ENCODE measurements at regions of chr11 and their contacts with region 1.

Region 1: GRCh38 chr11:62497132-62497915 is 49.3 kb downstream of the AHNAK start:
- DNase-seq: peak in 6 of 10 donors; percentile 11 to 67 (median 54)
- H3K4me3 ChIP-seq: no peak overlapping the region
- H3K27ac ChIP-seq: no peak overlapping the region
- H3K27me3 ChIP-seq: peaks cover 0 to 20% (median 0%) of the 10 kb centered on the region in 45 donors
- CTCF ChIP-seq: peak in 54 of 56 donors; percentile 11 to 84 (median 60)

Region 2: GRCh38 chr11:62132188-62132587 is 365.1 kb before region 1 on chr11:
- intact Hi-C with region 1: no loop called
- DNase-seq: peak in 2 of 10 donors; percentile 14 to 28
- H3K4me3 ChIP-seq: no peak overlapping the region
- H3K27ac ChIP-seq: peak overlapping the region in 2 of 59 donors; percentile 3 to 60
- H3K27me3 ChIP-seq: no peaks in the 10 kb centered on the region
- CTCF ChIP-seq: no peak

Region 3: DNA sequence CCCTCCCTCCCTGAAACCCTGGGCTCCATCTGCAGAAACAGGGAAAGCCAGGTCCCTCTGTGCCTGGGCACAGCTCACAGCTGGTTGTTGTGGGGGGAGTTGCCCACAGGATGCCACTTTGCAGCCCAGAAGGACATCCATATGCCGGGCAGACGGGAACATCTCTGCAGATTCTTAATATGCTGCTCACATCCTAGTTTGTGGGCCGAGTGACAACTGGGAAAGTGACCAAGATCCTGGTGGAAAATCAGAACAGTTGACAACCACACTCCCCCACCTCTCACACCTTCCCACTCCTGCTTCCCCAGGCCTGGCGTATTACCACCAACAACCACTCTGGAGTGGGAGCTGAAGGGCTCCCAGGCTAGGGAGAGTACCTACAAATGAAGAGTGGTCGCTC is 85.8 kb before region 1 on chr11:
- intact Hi-C with region 1: no loop called
- DNase-seq: peak in 9 of 10 donors; percentile 42 to 75 (median 62)
- H3K4me3 ChIP-seq: no peak overlapping the region
- H3K27ac ChIP-seq: peak overlapping the region in 1 of 59 donors; percentile 63
- H3K27me3 ChIP-seq: no peaks in the 10 kb centered on the region
- CTCF ChIP-seq: no peak

Region 4: DNA sequence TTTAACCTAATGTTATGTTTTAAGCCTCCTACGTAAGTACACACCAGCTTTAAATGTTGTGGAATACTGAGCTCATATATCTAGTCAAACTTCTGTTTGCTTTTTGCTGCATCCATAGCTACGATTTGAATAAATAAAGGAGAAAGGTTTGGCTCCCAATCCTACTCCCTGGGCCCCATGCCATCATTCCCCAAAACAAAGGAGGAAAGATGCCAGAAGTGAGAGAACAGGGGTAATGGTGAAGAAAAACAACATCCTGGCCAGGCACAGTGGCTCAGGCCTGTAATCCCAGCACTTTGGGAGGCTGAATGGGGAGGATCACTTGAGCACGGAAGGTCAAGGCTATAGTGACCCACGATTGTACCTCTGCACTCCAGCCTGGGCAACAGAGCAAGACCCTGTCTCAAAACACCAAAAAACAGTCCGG is 52.0 kb before region 1 on chr11:
- intact Hi-C with region 1: loop called in 1 of 2 experiments (anchors 5 kb)
- DNase-seq: peak in 1 of 10 donors; percentile 27
- H3K4me3 ChIP-seq: peak overlapping the region in 31 of 59 donors; percentile 37 to 76 (median 59)
- H3K27ac ChIP-seq: peak overlapping the region in 12 of 59 donors; percentile 21 to 94 (median 85)
- H3K27me3 ChIP-seq: peaks cover 0 to 3% (median 0%) of the 10 kb centered on the region in 45 donors
- CTCF ChIP-seq: no peak

Region 5: DNA sequence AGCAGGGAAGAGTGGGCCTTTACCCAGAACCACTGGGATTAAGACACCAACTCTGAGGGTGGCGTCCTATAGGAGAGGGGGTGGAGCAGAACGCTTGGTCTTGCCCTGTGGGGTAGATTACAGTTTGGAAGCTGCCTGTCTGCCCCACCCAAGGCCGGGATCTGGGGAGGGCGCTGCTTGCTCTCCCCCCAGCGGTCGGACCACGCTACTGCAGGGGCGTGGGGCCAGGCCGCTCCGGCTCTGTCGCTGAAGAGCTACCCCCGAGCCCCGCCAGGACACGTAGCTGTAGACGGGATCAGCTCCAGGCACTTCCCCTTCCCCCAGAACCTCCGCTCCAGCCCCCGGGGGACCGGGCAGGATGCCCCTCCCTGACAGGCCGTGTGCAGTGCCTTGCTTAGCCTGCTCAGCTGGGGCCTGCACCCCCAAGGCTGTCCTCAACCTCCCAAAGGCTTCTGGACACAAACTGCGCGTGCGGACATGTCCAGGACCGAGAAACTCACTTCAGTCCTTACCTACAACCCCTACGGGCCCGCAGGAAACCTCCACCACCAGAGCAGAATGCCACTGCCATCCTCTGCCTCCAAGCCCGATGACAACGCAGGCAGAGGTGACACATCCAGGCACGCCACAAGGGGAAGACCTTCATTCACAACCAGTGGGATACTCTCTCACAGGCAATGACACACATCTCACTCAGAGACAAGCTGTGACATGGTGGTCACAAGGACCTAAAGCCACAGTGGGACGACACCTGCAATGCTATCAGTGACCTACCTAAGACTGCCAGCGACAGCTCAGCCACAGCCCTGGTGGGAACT is 45.6 kb after region 1 on chr11:
- intact Hi-C with region 1: loop called (anchors 1 to 5 kb)
- DNase-seq: peak in 7 of 10 donors; percentile 38 to 82 (median 60)
- H3K4me3 ChIP-seq: peak overlapping the region in 51 of 59 donors; percentile 1 to 79 (median 65)
- H3K27ac ChIP-seq: peak overlapping the region in 54 of 59 donors; percentile 2 to 92 (median 69)
- H3K27me3 ChIP-seq: peaks cover 0 to 39% (median 27%) of the 10 kb centered on the region in 45 donors
- CTCF ChIP-seq: peak; percentile 75 to 100 (median 97)

Region 6: GRCh38 chr11:62556108-62556871 is 59.0 kb after region 1 on chr11:
- intact Hi-C with region 1: loop called in 1 of 2 experiments (anchors 5 kb)
- DNase-seq: peak in 9 of 10 donors; percentile 62 to 87 (median 80)
- H3K4me3 ChIP-seq: peak overlapping the region in 14 of 59 donors; percentile 2 to 33 (median 12)
- H3K27ac ChIP-seq: peak overlapping the region in 54 of 59 donors; percentile 1 to 86 (median 69)
- H3K27me3 ChIP-seq: no peaks in the 10 kb centered on the region
- CTCF ChIP-seq: no peak

Region 7: DNA sequence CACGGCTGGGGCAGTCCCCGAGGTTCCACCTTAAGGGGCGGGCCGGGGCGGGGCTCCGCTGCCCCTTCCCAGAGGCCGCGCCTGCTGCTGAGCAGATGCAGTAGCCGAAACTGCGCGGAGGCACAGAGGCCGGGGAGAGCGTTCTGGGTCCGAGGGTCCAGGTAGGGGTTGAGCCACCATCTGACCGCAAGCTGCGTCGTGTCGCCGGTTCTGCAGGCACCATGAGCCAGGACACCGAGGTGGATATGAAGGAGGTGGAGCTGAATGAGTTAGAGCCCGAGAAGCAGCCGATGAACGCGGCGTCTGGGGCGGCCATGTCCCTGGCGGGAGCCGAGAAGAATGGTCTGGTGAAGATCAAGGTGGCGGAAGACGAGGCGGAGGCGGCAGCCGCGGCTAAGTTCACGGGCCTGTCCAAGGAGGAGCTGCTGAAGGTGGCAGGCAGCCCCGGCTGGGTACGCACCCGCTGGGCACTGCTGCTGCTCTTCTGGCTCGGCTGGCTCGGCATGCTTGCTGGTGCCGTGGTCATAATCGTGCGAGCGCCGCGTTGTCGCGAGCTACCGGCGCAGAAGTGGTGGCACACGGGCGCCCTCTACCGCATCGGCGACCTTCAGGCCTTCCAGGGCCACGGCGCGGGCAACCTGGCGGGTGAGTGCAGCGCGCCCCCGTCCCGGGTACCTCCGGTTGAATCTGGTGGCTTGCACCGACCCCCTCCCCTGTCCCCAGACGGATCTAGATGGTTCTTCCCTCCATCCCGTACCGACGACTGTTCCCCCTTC is 383.7 kb after region 1 on chr11 and contains the start of gene SLC3A2:
- intact Hi-C with region 1: no loop called
- DNase-seq: peak; percentile 77 to 90 (median 85)
- H3K4me3 ChIP-seq: peak within 1 kb of the TSS; percentile 59 to 100 (median 95)
- H3K27ac ChIP-seq: peak within 1 kb of the TSS; percentile 91 to 100 (median 99)
- H3K27me3 ChIP-seq: no peaks in the 10 kb centered on the region
- CTCF ChIP-seq: peak; percentile 52 to 96 (median 85)
- total RNA-seq, gene SLC3A2: 101 to 299 (median 140) TPM